Ovary (tissue), 10 donors: ENCODE measurements at regions of chr10 and their contacts with region 1.

Region 1: DNA sequence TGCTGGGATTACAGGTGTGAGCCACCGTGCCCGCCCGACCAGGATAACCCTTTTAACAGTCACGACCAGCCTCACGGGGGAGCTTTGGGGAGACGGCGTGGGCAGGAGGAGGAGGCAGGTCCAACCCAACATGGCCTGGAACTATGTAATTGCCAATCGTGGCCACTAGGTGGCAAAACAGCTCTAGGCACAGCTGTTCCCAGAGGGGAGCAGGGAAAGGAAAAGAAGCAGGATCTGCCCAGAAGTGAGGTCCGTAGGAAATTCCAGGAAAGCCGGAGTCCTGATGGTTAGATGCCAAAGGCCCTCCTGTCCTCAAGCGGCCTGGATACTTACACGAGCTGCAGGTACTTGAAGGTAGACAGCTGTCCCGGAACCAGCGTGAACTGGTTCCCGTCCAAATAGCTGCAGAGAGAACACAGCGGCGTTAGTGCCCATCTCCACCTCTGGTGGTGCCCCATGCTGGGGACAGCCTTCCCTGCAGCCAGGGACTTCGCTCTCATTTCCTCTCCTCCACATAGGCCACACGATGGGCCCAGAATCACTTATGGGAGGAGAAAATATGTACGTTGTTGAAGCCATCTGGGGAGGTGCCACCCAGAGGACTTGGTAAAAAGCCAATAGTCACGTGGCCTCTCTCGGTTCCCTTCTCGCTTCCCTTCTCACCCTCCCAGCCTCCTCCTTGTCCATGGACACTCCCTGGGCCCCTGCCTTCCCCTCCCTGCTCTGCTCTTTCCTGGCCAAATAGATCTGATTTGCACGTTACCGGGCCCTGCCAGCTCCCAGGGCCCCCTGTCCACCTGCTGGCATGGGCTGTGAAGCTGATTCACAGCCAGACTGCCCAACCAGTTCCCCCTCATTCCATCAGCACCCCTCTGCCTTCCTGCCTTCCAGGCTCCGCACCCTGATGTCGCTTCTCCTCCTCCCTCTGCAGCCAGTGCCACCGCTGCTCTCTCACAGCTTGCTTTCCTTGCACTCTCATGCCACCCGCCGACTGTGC is 148.1 kb downstream of the SLIT1 start:
- DNase-seq: peak; percentile 72 to 83 (median 80)
- H3K4me3 ChIP-seq: peak overlapping the region; percentile 17
- H3K27ac ChIP-seq: no peak overlapping the region
- H3K4me1 ChIP-seq: peaks cover 1% of the 10 kb centered on the region
- H3K27me3 ChIP-seq: no peaks in the 10 kb centered on the region
- CTCF ChIP-seq: peak; percentile 57 to 83 (median 76)
- EP300 ChIP-seq: no peak
- POLR2A ChIP-seq: no peak

Region 2: GRCh38 chr10:96632974-96633710 is 404.5 kb before region 1 on chr10:
- intact Hi-C with region 1: loop called in 1 of 4 experiments (anchors 10 kb)
- DNase-seq: no peak
- H3K4me3 ChIP-seq: no peak overlapping the region
- H3K27ac ChIP-seq: no peak overlapping the region
- H3K4me1 ChIP-seq: peaks cover 7% of the 10 kb centered on the region
- H3K27me3 ChIP-seq: no peaks in the 10 kb centered on the region
- CTCF ChIP-seq: no peak
- EP300 ChIP-seq: no peak
- POLR2A ChIP-seq: no peak

Region 3: GRCh38 chr10:96831867-96832720 is 205.6 kb before region 1 on chr10 and contains the start of gene LCOR:
- intact Hi-C with region 1: loop called in 1 of 4 experiments (anchors 10 kb)
- DNase-seq: peak; percentile 87 to 93 (median 90)
- H3K4me3 ChIP-seq: peak within 1 kb of the TSS; percentile 68
- H3K27ac ChIP-seq: peak within 1 kb of the TSS; percentile 87 to 98
- H3K4me1 ChIP-seq: peaks cover 5% of the 10 kb centered on the region
- H3K27me3 ChIP-seq: no peaks in the 10 kb centered on the region
- CTCF ChIP-seq: peak in 2 of 3 donors; percentile 7 to 14
- EP300 ChIP-seq: no peak
- POLR2A ChIP-seq: peak; percentile 74
- total RNA-seq, gene LCOR: 22.5 to 44.9 (median 37.7) TPM